ENCODE measurements at regions of chr1 and their contacts with region 1.

Region 1: DNA sequence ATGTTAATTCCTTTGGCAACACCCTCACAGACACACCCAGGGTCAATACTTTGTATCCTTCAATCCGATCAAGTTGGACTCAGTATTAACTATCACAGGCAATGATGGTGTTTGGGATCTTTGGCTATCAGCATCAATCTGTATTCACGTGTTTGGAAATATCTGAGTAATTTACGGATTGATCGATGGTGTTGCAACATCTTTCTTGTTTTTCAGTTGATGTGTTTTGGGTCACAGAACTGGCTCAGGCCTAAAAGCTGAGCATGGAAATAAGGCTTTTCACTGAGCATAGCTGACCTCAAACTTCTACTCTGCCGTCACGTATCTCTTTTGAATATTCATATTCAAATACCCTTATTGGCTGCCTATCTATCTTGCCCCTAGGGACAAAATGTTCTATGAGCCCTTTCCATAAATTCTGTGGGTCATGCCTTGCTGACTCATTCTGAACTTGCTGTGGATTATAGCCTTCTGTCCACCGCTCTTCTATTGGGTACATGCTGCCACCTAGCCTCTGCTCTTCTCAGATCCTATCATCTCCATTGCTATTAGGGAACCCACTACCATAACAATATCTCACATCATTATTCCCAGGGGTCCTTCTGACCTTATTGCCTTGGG is 156.0 kb downstream of the PDE4B start:
- DNase-seq: no peak
- H3K4me3 ChIP-seq: no peak overlapping the region
- H3K27me3 ChIP-seq: no peaks in the 10 kb centered on the region
- CTCF ChIP-seq: peak; percentile 38

Region 2: GRCh38 chr1:65339866-65340468 is 608.8 kb before region 1 on chr1:
- CTCF ChIA-PET with region 1: no interaction called
- POLR2A ChIA-PET with region 1: no interaction called
- DNase-seq: no peak
- H3K4me3 ChIP-seq: no peak overlapping the region
- H3K27me3 ChIP-seq: no peaks in the 10 kb centered on the region
- CTCF ChIP-seq: no peak

Region 3: DNA sequence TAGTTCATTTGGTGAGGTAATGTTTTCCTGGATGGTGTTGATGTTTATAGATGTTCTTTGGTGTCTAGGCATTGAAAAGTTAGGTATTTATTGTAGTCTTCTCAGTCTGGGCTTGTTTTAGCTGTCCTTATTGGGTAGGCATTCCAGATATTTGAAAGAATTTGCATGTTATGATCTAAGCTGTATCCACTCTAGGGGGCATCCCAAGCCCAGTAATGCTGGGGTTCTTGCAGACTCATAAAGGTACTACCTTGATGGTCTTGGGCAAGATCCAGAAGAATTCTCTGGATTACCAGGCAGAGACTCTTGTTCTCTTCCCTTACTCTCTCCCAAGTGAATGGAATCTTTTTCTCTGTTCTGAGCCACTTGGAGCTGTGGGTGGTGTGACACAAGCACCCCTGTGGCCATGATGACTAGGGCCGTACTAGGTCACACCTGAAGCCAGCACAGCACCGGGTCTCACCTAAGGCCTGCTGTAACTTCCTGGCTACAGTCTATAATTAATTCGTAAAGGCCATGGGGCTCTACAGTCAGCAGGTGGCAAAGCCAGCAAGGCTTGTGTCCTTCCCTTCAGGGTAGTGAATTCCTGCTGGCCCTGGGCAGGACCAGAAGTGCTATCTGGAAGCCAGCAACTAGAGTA is 230.8 kb before region 1 on chr1:
- CTCF ChIA-PET with region 1: interaction called, 10 read pairs
- POLR2A ChIA-PET with region 1: no interaction called
- DNase-seq: peak; percentile 12
- H3K4me3 ChIP-seq: no peak overlapping the region
- H3K27me3 ChIP-seq: no peaks in the 10 kb centered on the region
- CTCF ChIP-seq: peak; percentile 35; the same call in 1 of the 2 replicates